Activated T-helper 2 cell treated with anti-CD3 and anti-CD28 coated beads, Interferon-gamma antibody, Interleukin-2, Interleukin-4, amounts not matched to agents 10 μg/mL and 5 μg/mL and 100 μg/mL, durations not matched to agents 14 hours and 24 hours and 36 hours (primary cell): ENCODE measurements at regions of chr6 and their contacts with region 1.

Region 1: GRCh38 chr6:27472617-27473400 is at the start of gene ZNF184:
- DNase-seq: peak; percentile 87
- H3K4me3 Mint-ChIP-seq: peak within 1 kb of the TSS; percentile 92
- H3K27ac Mint-ChIP-seq: peak within 1 kb of the TSS; percentile 84
- H3K4me1 Mint-ChIP-seq: peaks cover 38% of the 10 kb centered on the region
- H3K27me3 Mint-ChIP-seq: peaks cover 3% of the 10 kb centered on the region
- total RNA-seq, gene ZNF184: 8.4 and 9.2 TPM in 2 replicates

Region 2: DNA sequence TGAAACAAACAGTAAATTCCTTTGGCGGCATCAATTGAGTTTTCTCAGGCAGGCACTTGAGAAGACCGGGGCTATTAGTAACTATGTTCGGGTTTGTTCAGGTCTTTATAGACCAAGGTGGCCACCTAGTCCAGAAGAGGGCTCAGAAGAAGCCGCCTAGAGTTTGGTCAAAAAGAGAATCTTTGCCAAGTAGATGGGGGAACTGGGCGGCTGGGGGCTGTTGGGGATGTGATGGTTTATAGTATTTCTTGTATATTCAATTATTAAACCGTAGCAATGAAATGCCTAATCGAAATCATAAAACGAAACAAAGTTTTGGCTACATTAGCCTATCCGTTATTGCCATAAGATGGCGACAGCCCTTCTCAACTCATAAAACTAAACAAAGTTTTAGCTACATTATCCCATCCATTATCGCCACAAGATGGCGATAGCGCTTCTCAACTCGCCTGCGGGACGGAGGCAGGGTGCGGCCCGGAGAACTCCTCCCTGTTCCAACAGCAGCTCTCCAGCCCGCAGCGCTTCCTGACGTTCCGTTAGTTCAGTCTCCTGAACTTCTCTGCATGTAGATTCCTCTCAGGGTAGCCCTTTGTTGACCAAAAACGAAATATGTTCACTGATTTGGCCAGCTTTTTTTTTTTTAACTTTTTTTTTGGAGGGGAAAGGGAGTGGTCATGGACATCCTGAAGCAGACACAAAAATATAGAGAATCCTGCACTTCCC is 345.8 kb before region 1 on chr6:
- intact Hi-C with region 1: loop called (anchors 5 kb)
- DNase-seq: peak; percentile 78
- H3K4me3 Mint-ChIP-seq: peak overlapping the region; percentile 84
- H3K27ac Mint-ChIP-seq: peak overlapping the region; percentile 91
- H3K4me1 Mint-ChIP-seq: peaks cover 39% of the 10 kb centered on the region
- H3K27me3 Mint-ChIP-seq: no peaks in the 10 kb centered on the region

Region 3: DNA sequence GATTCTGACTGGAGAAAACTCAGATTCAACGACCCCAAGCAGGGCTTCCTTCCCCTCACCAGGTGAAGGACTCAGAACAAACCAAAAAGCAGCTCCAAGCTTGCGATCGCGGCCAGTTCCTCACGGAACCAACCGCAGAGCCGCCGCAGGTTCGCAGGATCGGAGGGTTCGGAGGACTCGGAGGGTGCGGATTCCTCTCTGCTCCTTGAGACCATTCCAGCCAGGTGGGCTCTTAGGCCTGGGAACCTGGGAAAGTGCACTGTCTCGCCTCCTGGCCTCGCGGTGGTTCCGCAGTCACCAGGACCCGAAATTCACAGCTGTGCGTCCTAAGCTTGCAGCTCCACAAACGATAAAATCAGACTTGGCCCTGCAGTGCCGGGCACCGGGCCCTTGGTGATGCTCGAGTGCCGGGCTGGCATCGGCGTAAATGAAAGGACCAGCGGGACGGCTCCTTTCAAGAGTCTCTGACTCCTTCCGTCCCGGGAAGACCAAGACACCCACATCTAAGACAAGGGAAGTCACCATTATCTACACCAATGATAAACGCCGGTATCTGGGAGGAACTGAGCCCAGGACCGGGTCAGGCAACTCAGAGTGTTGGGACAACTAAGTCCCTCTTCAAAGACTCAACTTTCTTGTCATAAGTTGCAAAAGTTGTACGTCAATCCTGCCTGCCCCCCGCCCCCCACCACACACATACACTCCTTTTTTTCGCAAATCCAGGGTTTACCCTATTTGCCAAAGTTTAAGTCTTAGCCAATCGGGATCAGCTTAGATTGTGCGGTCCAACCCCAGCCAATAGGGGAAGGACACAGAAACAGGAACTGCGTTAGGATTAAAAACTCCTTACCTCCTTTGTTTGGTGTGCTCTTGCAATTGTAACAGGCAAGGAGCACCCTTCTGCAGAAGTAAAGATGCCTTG is 295.1 kb before region 1 on chr6:
- intact Hi-C with region 1: loop called (anchors 2 kb)
- DNase-seq: peak; percentile 65
- H3K4me3 Mint-ChIP-seq: peak overlapping the region; percentile 90
- H3K27ac Mint-ChIP-seq: peak overlapping the region; percentile 87
- H3K4me1 Mint-ChIP-seq: peaks cover 11% of the 10 kb centered on the region
- H3K27me3 Mint-ChIP-seq: peaks cover 37% of the 10 kb centered on the region

Region 4: DNA sequence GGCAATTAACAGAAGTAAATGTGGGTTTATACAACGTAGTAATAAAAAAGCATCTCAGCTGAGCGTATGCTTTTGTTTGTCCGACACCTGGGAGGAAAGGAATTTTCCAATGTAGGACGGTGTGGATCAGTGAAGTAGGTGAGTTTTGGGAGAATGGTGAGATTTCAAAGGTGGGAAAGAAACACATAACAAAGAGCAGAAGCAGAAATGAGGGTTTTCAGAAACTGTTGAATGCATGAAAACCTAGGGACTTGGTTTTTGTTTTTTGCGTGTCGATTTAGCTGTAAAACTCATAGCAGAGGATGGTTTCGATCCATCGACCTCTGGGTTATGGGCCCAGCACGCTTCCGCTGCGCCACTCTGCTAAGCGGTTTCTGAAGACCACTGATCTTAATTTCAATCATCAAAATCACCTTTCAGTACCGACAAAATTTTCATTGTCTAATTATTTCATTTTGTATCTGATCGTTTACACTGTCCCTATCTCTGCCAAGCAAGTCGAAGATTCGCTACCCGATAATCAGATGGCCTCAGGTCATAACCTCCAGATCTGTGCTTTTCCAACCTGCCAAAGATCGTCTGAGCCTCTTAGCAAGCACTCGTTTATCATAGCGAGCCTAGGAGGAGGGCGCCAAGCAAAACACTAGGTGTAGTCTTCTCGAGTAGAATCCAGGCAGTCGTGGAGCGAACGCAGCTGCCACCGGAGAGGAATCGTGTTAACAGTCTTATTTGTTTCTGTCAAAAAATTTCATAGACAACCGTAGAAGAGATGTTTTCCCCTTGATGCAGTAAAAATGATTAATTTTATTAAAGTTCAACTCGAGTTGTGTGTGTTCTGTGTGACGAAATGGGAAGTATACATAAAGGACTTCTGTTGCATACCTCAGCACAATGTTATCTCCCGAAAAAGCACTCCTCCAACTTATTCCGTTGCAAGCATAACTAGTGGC is 139.8 kb before region 1 on chr6:
- intact Hi-C with region 1: loop called (anchors 10 kb)
- DNase-seq: peak; percentile 15
- H3K4me3 Mint-ChIP-seq: peak overlapping the region; percentile 88
- H3K27ac Mint-ChIP-seq: peak overlapping the region; percentile 74
- H3K4me1 Mint-ChIP-seq: peaks cover 11% of the 10 kb centered on the region
- H3K27me3 Mint-ChIP-seq: peaks cover 18% of the 10 kb centered on the region

Region 5: GRCh38 chr6:27388293-27389197 is 84.3 kb before region 1 on chr6 and contains the start of gene ZNF391:
- intact Hi-C with region 1: loop called (anchors 1 kb)
- DNase-seq: peak; percentile 59
- H3K4me3 Mint-ChIP-seq: peak within 1 kb of the TSS; percentile 91
- H3K27ac Mint-ChIP-seq: peak within 1 kb of the TSS; percentile 72
- H3K4me1 Mint-ChIP-seq: peaks cover 9% of the 10 kb centered on the region
- H3K27me3 Mint-ChIP-seq: peaks cover 9% of the 10 kb centered on the region
- total RNA-seq, gene ZNF391: 0.44 and 0.82 TPM in 2 replicates